PC-9 (cell line): ENCODE measurements at regions of chr6 and their contacts with region 1.

Region 1: GRCh38 chr6:106979427-106979884 is 4.9 kb upstream of the CD24 start:
- DNase-seq: peak; percentile 75 to 83
- H3K4me3 ChIP-seq: no peak overlapping the region
- H3K27ac ChIP-seq: no peak overlapping the region
- H3K4me1 ChIP-seq: peaks cover 14% of the 10 kb centered on the region
- H3K27me3 ChIP-seq: no peaks in the 10 kb centered on the region
- CTCF ChIP-seq: peak; percentile 98

Region 2: GRCh38 chr6:106360410-106360988 is 619.0 kb before region 1 on chr6 and contains the start of gene CRYBG1:
- CTCF ChIA-PET with region 1: interaction called, 4 read pairs
- POLR2A ChIA-PET with region 1: no interaction called
- intact Hi-C with region 1: loop called (anchors 5 kb)
- DNase-seq: peak; percentile 75 to 94
- H3K4me3 ChIP-seq: peak within 1 kb of the TSS; percentile 86
- H3K27ac ChIP-seq: peak within 1 kb of the TSS; percentile 34; the same call in 1 of the 2 replicates
- H3K4me1 ChIP-seq: peaks cover 11% of the 10 kb centered on the region
- H3K27me3 ChIP-seq: no peaks in the 10 kb centered on the region
- CTCF ChIP-seq: peak; percentile 93
- total RNA-seq, gene CRYBG1: 42.7 and 49.3 TPM in 2 replicates

Region 3: GRCh38 chr6:106608062-106608668 is 371.3 kb before region 1 on chr6:
- CTCF ChIA-PET with region 1: interaction called, 5 read pairs
- POLR2A ChIA-PET with region 1: interaction called, 5 read pairs
- intact Hi-C with region 1: loop called (anchors 1 kb)
- DNase-seq: peak; percentile 10 to 47
- H3K4me3 ChIP-seq: no peak overlapping the region
- H3K27ac ChIP-seq: no peak overlapping the region
- H3K4me1 ChIP-seq: no peaks in the 10 kb centered on the region
- H3K27me3 ChIP-seq: no peaks in the 10 kb centered on the region
- CTCF ChIP-seq: peak; percentile 89

Region 4: DNA sequence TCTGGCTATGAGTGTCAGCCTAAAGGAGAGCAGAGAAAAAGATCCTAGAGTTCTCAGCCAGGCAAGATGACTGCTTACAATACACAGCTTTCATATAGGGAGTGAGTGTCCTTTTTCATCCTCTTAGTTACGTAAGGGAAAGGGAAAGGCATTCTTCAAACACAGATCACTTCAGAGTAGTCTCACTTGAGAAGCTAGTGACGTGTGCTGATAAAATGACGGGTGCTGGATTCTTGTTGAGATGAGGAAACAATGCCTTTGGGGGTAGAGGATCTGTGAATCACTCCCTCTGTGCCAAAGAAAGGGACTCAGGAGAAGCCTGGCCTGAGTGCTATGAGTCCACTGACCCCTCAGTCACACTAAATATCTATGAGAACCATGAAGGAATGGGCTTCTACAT is 232.8 kb before region 1 on chr6:
- CTCF ChIA-PET with region 1: no interaction called
- POLR2A ChIA-PET with region 1: no interaction called
- intact Hi-C with region 1: loop called (anchors 1 kb)
- DNase-seq: peak; percentile 51 to 100
- H3K4me3 ChIP-seq: peak overlapping the region; percentile 12; the same call in 1 of the 2 replicates
- H3K27ac ChIP-seq: peak overlapping the region; percentile 98
- H3K4me1 ChIP-seq: peaks cover 62% of the 10 kb centered on the region
- H3K27me3 ChIP-seq: no peaks in the 10 kb centered on the region
- CTCF ChIP-seq: no peak

Region 5: GRCh38 chr6:106870069-106870468 is 109.4 kb before region 1 on chr6:
- CTCF ChIA-PET with region 1: no interaction called
- POLR2A ChIA-PET with region 1: no interaction called
- intact Hi-C with region 1: loop called (anchors 5 kb)
- DNase-seq: peak; percentile 60 to 99
- H3K4me3 ChIP-seq: no peak overlapping the region
- H3K27ac ChIP-seq: peak overlapping the region; percentile 74
- H3K4me1 ChIP-seq: peaks cover 43% of the 10 kb centered on the region
- H3K27me3 ChIP-seq: no peaks in the 10 kb centered on the region
- CTCF ChIP-seq: no peak

Region 6: GRCh38 chr6:106997390-106998158 is 18.1 kb after region 1 on chr6:
- CTCF ChIA-PET with region 1: interaction called, 14 read pairs
- POLR2A ChIA-PET with region 1: no interaction called
- intact Hi-C with region 1: no loop called
- DNase-seq: peak; percentile 57
- H3K4me3 ChIP-seq: no peak overlapping the region
- H3K27ac ChIP-seq: no peak overlapping the region
- H3K4me1 ChIP-seq: no peaks in the 10 kb centered on the region
- H3K27me3 ChIP-seq: no peaks in the 10 kb centered on the region
- CTCF ChIP-seq: peak; percentile 94